ENCODE measurements at regions of chr10 and their contacts with region 1.

Region 1: DNA sequence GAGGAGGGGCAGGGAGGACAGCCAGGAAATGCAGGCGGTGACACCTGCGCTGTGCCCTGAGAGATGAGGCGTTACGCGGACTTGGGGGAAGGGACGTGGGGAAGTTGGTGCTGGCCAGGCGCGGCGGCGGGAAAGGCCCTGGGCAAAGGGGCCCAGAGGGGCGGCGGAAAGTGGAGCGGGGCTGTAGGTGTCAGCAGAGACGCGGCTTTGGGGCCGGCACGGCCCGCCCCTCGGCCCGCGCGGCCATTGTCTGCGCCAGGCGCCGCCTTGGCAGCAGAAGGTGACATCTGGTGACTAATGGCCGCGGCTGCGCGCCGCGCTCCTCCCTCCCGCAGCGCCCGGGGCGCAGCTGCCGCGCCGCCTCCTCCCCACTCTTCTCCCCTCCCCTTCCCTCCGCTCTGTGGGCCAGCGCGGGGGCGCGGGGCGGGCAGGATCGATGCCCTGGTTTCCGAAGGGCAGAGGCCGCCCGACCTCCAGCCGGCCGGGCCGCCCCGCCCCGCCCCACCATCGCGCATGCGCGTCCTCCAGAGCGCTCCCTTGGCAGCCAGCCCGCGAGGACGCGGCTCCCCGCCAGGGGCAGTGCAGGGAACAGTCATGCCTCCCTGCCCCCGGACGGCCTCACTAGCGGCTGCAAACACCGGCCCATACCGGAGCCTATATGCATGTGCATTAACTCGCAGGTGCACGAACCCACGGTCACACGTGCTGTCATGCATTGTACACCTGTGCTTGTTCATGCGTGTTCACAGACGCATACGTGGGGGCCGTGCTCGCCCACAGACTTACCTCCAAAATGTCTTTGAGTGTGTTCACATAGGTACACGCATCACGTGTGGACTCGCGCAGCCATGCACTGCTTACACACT is 269.6 kb downstream of the RPS24 start:
- DNase-seq: peak; percentile 94 to 98
- H3K4me3 ChIP-seq: peak overlapping the region; percentile 69
- H3K4me3 Mint-ChIP-seq: peak overlapping the region; percentile 95
- H3K27ac Mint-ChIP-seq: peak overlapping the region; percentile 95
- H3K4me1 ChIP-seq: peaks cover 17% of the 10 kb centered on the region
- H3K4me1 Mint-ChIP-seq: peaks cover 13% of the 10 kb centered on the region
- H3K27me3 ChIP-seq: no peaks in the 10 kb centered on the region
- H3K27me3 Mint-ChIP-seq: peaks cover 15% of the 10 kb centered on the region
- CTCF ChIP-seq: peak; percentile 70 to 85

Region 2: DNA sequence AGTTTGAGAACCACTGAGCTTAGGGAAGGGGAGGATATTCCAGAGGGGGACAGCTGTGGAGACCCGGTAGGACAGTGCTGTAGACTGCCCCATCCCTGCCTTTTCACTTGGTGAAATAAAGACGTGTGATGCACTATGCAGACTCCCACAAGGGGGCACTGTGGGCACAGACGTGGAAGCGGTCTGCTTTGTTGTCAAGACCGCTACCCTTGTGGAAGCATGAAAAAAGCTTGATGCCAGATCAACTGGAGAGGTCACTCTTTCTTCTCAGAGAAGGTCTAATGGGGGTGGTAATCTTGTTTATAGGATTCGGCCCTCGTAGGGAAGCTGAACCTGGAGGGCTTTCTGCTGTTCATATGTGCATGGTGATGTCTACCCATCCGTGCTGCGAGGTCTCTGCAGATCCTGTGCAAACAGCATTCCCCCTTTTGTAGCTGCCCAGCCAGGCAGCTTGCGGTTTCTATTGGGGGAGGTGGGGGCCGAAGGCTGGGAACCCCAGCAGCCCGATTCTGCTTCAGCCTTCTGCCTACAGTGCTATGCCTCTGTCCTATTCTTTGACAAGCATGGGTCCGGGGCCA is 255.8 kb before region 1 on chr10:
- CTCF ChIA-PET with region 1: interaction called, 10 read pairs
- POLR2A ChIA-PET with region 1: no interaction called
- intact Hi-C with region 1: loop called (anchors 1 kb)
- DNase-seq: peak; percentile 83 to 92
- H3K4me3 ChIP-seq: no peak overlapping the region
- H3K4me3 Mint-ChIP-seq: no peak overlapping the region
- H3K27ac Mint-ChIP-seq: no peak overlapping the region
- H3K4me1 ChIP-seq: no peaks in the 10 kb centered on the region
- H3K4me1 Mint-ChIP-seq: no peaks in the 10 kb centered on the region
- H3K27me3 ChIP-seq: no peaks in the 10 kb centered on the region
- H3K27me3 Mint-ChIP-seq: no peaks in the 10 kb centered on the region
- CTCF ChIP-seq: peak; percentile 91 to 94

Region 3: GRCh38 chr10:78211561-78212051 is 91.6 kb before region 1 on chr10:
- CTCF ChIA-PET with region 1: interaction called, 9 read pairs
- POLR2A ChIA-PET with region 1: no interaction called
- intact Hi-C with region 1: loop called (anchors 1 kb)
- DNase-seq: peak in 1 of 2 experiments; percentile 58
- H3K4me3 ChIP-seq: no peak overlapping the region
- H3K4me3 Mint-ChIP-seq: no peak overlapping the region
- H3K27ac Mint-ChIP-seq: no peak overlapping the region
- H3K4me1 ChIP-seq: no peaks in the 10 kb centered on the region
- H3K4me1 Mint-ChIP-seq: no peaks in the 10 kb centered on the region
- H3K27me3 ChIP-seq: no peaks in the 10 kb centered on the region; the same call in 1 of the 2 replicates
- H3K27me3 Mint-ChIP-seq: no peaks in the 10 kb centered on the region
- CTCF ChIP-seq: peak; percentile 36 to 75

Region 4: GRCh38 chr10:78263521-78263988 is 39.7 kb before region 1 on chr10:
- CTCF ChIA-PET with region 1: interaction called, 19 read pairs
- POLR2A ChIA-PET with region 1: interaction called, 9 read pairs
- intact Hi-C with region 1: loop called (anchors 1 kb)
- DNase-seq: no peak
- H3K4me3 ChIP-seq: no peak overlapping the region
- H3K4me3 Mint-ChIP-seq: no peak overlapping the region
- H3K27ac Mint-ChIP-seq: no peak overlapping the region
- H3K4me1 ChIP-seq: peaks cover 40% of the 10 kb centered on the region
- H3K4me1 Mint-ChIP-seq: peaks cover 45% of the 10 kb centered on the region
- H3K27me3 ChIP-seq: no peaks in the 10 kb centered on the region
- H3K27me3 Mint-ChIP-seq: no peaks in the 10 kb centered on the region
- CTCF ChIP-seq: no peak

Region 5: DNA sequence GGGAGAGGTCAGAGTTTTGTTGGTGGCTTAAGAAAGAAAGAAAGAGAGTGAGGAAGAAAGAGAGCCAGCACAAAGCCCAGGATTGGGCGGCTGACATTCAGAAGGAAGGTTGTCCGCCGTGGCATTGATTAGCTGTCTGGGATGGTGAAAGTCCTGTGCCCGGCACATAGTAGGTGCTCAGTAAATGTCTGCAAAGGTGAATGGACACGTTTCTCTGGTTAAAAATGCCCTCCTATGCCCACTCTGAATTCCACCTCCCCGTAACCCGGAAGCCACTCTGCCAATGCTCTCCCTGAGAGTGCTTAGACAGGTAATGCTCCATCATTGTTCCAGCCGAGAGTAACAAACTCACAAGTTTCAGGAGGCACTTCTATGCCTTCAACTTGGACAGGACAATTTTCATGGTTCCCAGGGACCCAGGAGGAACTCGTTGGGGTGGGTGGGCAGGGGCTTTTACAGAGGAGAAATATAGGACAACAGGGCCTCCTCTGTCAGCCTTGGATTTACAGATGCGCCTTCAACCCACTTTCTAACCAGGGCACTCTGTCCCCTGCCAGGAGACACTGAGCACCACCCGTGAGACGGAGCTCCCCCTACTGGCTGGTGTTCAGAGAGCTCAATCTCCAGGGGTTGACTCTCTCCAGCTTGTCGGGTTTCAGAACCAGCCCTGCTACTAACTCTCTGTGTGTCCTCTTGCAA is 354.1 kb after region 1 on chr10:
- CTCF ChIA-PET with region 1: no interaction called
- POLR2A ChIA-PET with region 1: no interaction called
- intact Hi-C with region 1: loop called (anchors 10 kb)
- DNase-seq: peak; percentile 69 to 78
- H3K4me3 ChIP-seq: no peak overlapping the region
- H3K4me3 Mint-ChIP-seq: no peak overlapping the region
- H3K27ac Mint-ChIP-seq: no peak overlapping the region
- H3K4me1 ChIP-seq: no peaks in the 10 kb centered on the region
- H3K4me1 Mint-ChIP-seq: no peaks in the 10 kb centered on the region
- H3K27me3 ChIP-seq: no peaks in the 10 kb centered on the region
- H3K27me3 Mint-ChIP-seq: no peaks in the 10 kb centered on the region
- CTCF ChIP-seq: peak; percentile 70 to 79

Region 6: GRCh38 chr10:79195091-79195923 is 892.1 kb after region 1 on chr10:
- CTCF ChIA-PET with region 1: no interaction called
- POLR2A ChIA-PET with region 1: no interaction called
- intact Hi-C with region 1: loop called (anchors 2 kb)
- DNase-seq: peak; percentile 82 to 89
- H3K4me3 ChIP-seq: no peak overlapping the region
- H3K4me3 Mint-ChIP-seq: no peak overlapping the region
- H3K27ac Mint-ChIP-seq: peak overlapping the region; percentile 54
- H3K4me1 ChIP-seq: peaks cover 6% of the 10 kb centered on the region
- H3K4me1 Mint-ChIP-seq: peaks cover 6% of the 10 kb centered on the region
- H3K27me3 ChIP-seq: no peaks in the 10 kb centered on the region
- H3K27me3 Mint-ChIP-seq: no peaks in the 10 kb centered on the region
- CTCF ChIP-seq: peak; percentile 94 to 96

Measured in Caco-2 (cell line).